ENCODE measurements at regions of chr1 and their contacts with region 1.

Region 1: GRCh38 chr1:115595279-115596079 is 46.3 kb upstream of the VANGL1 start:
- DNase-seq: peak; percentile 92
- H3K4me3 ChIP-seq: no peak overlapping the region
- CTCF ChIP-seq: peak; percentile 89

Region 2: GRCh38 chr1:115112496-115113375 is 482.7 kb before region 1 on chr1:
- CTCF ChIA-PET with region 1: interaction called, 28 read pairs
- POLR2A ChIA-PET with region 1: no interaction called
- DNase-seq: no peak
- H3K4me3 ChIP-seq: no peak overlapping the region
- CTCF ChIP-seq: peak; percentile 78

Region 3: DNA sequence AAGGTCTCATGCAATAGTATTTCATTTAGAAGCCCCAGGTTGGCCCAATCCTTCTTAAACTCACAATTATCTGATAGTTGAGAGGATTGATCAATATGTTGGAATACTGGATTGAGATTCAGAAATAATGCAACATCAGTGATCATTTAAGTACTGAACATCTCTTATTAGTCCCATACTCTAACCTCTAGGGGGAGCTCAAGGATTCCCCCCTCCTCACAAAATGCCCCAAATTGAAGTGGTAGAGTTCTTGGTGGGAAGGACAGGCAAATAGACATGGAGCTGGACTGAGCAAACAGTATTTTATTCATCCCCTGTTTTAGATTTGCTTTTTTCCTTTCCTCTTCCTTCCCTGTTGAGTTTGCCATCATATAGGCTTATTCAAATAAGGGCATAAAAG is 320.3 kb before region 1 on chr1:
- CTCF ChIA-PET with region 1: interaction called, 11 read pairs
- POLR2A ChIA-PET with region 1: no interaction called
- DNase-seq: no peak
- H3K4me3 ChIP-seq: no peak overlapping the region
- CTCF ChIP-seq: peak; percentile 5

Region 4: DNA sequence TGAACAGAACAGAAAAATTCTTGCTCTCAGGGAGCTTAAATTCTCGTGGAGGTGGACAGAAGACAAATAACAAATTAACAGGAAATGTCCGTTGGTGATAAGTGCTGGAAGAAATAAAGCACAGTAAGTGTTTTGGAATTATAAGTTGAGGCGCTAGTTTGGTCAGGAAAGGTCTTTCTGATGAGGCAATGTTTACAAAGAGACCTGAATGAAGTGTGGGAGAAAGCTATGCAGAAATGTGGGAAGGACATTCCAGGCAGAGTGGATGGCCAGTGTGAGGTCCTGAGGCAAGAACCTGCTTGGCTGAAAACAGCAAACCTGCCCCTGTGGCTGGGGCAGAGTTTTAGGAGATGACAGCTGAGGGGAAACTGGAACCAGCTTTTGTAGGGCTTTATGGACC is 280.7 kb before region 1 on chr1:
- CTCF ChIA-PET with region 1: interaction called, 21 read pairs
- POLR2A ChIA-PET with region 1: interaction called, 5 read pairs
- DNase-seq: no peak
- H3K4me3 ChIP-seq: no peak overlapping the region
- CTCF ChIP-seq: no peak

Region 5: DNA sequence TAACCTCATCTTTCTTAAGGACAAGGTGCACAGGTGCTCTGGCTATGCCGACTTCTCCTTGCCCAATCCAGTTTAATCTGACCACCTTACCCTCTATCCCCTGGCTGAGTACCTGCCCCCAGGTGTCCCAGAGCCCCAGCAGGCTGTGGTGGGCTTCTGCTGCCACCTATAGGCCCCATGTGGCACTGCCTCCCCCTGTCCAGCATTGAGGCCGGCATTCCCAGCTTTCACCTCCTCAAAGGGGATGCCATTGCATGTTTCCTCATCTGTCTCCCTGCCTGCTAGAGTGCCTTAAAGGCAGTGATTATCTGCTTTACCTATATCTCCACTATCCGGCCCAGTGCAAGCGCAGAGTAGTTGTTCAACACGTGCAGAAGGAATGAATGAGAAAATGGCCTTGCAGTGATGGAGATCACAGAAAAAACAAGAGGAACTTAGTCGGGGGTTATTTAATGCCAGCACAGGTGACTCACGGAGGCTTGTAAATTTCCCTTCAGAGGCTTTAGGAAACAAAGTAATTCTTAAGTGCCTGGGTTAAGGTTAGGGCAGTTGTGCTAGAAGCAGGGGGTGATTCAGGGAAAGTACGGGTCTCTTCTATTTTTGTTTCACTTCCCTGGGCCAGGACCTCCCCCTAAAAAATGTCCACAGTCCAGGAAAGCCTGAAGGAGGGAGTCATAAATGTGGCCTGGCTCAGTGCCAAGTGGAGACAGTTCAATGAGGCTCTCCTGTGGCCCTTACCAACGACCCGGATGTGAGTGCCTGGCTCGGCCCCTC is 125.6 kb before region 1 on chr1:
- CTCF ChIA-PET with region 1: interaction called, 61 read pairs
- POLR2A ChIA-PET with region 1: no interaction called
- DNase-seq: no peak
- H3K4me3 ChIP-seq: no peak overlapping the region
- CTCF ChIP-seq: peak; percentile 98

Region 6: GRCh38 chr1:115545791-115546733 is 49.4 kb before region 1 on chr1:
- CTCF ChIA-PET with region 1: interaction called, 15 read pairs
- POLR2A ChIA-PET with region 1: no interaction called
- DNase-seq: peak; percentile 92
- H3K4me3 ChIP-seq: peak overlapping the region; percentile 27
- CTCF ChIP-seq: peak; percentile 87

Region 7: DNA sequence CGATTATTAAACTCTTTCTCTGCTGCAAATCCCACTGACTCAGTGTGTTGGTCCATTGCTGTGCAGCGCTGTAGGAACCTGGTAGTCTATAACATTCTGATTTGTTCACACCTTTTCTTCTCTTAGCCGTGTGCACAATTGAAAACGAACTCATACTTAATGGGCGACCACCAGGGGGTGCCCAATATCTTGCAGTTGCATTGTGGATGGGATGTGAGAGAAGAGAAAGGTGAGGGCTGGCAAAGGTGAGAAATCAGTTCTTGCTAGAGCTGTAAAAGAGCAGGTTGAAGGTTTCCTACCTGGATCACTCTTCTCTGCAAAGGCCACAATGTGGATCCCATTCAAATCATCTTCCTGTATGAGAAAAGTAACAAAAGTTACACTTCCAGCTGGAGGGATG is 122.1 kb after region 1 on chr1:
- CTCF ChIA-PET with region 1: no interaction called
- POLR2A ChIA-PET with region 1: no interaction called
- DNase-seq: no peak
- H3K4me3 ChIP-seq: no peak overlapping the region
- CTCF ChIP-seq: peak; percentile 16

Region 8: DNA sequence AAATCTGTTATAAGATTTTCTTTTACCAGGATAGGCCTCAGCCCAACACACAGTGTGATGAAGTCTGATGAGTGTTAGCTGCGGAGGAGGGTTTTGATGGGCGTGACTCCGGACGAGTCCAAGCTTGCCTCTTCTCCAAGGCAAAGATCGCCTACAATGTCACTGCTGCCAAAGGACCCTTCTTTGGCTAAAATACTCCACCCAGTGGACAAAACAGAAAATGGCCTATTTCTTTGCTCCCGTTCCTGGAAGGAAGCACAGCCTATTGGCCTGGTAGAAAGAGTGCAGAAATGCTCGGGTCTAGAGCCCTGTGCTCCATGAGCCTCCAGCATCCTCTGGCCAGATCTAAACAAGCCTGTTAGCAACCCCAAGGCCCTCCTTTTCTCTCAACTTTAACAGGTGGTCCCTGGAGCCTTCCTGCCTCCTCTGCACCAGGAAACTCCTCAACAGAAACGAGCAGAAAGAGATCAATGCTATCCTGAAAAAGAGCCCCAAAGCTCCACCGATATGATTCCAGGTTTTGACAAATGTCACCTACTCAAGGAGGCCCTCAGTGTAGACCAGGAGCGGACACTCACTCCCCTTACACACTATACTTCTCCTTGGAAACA is 176.5 kb after region 1 on chr1:
- CTCF ChIA-PET with region 1: interaction called, 20 read pairs
- POLR2A ChIA-PET with region 1: no interaction called
- DNase-seq: peak; percentile 46
- H3K4me3 ChIP-seq: peak overlapping the region; percentile 18; the same call in 1 of the 2 replicates
- CTCF ChIP-seq: peak; percentile 65

Measured in AG04449 (cell line).